ENCODE measurements at regions of chr1 and their contacts with region 1.

Region 1: DNA sequence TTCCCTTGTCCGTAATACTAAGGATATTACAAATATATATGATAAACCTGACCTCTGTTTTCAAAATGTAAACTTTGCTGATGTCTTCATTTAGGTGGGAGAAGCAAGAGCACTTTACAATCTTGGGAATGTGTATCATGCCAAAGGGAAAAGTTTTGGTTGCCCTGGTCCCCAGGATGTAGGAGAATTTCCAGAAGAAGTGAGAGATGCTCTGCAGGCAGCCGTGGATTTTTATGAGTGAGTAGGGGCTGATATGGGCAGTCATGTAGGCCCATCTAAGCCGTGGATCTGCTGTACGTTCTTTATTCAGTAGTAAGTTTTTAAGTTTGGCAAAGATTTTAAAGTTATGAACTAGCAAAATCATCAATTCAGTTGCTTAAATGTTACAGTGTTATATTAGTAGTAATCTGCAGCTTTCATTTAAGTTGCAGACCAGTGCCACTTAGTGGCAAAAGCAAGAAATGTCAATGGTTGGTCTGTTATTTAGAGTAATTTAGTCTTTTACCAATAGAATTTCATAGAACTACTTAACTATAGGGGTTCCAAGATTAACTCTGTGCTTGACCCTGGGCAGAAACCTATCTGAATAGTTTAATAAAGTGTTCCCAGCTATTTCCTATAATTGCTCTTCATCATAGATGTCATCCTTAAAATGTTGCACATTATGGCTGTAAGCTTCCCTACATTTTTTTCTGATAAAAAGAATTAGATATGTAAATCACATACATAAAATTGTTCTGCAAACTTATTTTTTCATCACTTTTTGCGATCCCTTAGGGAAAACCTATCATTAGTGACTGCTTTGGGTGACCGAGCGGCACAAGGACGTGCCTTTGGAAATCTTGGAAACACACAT is 21.3 kb downstream of the GPSM2 start:
- DNase-seq: peak; percentile 10
- H3K4me3 Mint-ChIP-seq: no peak overlapping the region
- H3K27ac Mint-ChIP-seq: no peak overlapping the region
- H3K4me1 Mint-ChIP-seq: no peaks in the 10 kb centered on the region
- H3K27me3 Mint-ChIP-seq: no peaks in the 10 kb centered on the region

Region 2: GRCh38 chr1:108828022-108828961 is 69.8 kb before region 1 on chr1:
- intact Hi-C with region 1: loop called (anchors 1 kb)
- DNase-seq: peak; percentile 45
- H3K4me3 Mint-ChIP-seq: no peak overlapping the region
- H3K27ac Mint-ChIP-seq: no peak overlapping the region
- H3K4me1 Mint-ChIP-seq: no peaks in the 10 kb centered on the region
- H3K27me3 Mint-ChIP-seq: peaks cover 6% of the 10 kb centered on the region

Region 3: GRCh38 chr1:108913105-108913948 is 15.2 kb after region 1 on chr1:
- intact Hi-C with region 1: no loop called
- DNase-seq: no peak
- H3K4me3 Mint-ChIP-seq: no peak overlapping the region
- H3K27ac Mint-ChIP-seq: no peak overlapping the region
- H3K4me1 Mint-ChIP-seq: no peaks in the 10 kb centered on the region
- H3K27me3 Mint-ChIP-seq: no peaks in the 10 kb centered on the region

Measured in activated T-helper 1 cell treated with anti-CD3 and anti-CD28 coated beads, Interleukin-12 subunit alpha, Interleukin-12 subunit beta, Interleukin-2, Interleukin-4 antibody, amounts not matched to agents 30 ng/mL and 10 ng/mL and 1 ng/mL, durations not matched to agents 14 hours and 24 hours and 36 hours (primary cell).